IMR-90 (cell line): ENCODE measurements at regions of chr7 and their contacts with region 1.

Region 1: DNA sequence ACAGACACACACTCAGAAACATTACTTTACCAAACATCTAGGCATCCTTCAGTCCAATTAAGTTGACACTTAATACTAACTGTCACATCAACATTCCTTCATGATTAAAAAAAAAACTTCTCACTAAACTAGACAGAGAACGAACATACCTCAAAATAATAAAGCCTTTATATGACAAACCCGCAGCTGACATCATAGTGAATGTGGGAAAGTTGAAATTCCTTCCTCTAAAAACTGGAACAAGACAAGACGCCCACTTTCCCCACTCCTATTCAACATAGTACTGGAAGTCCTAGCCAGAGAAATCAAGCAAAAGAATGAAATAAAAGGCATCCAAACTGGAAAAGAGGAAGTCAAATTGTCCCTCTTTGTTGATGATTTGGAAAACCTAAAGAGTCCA is 96.9 kb upstream of the PPP1R9A start:
- DNase-seq: no peak
- ATAC-seq: no peak
- H3K4me3 ChIP-seq: no peak overlapping the region
- H3K27ac ChIP-seq: no peak overlapping the region
- H3K4me1 ChIP-seq: no peaks in the 10 kb centered on the region
- H3K27me3 ChIP-seq: no peaks in the 10 kb centered on the region
- CTCF ChIP-seq: no peak
- POLR2A ChIP-seq: no peak
- RAD21 ChIP-seq: no peak

Region 2: GRCh38 chr7:94787285-94787684 is 23.2 kb before region 1 on chr7:
- CTCF ChIA-PET with region 1: no interaction called
- POLR2A ChIA-PET with region 1: no interaction called
- dilution Hi-C with region 1: no loop called
- in situ Hi-C with region 1: no loop called
- intact Hi-C with region 1: loop called (anchors 2 kb)
- DNase-seq: no peak
- ATAC-seq: no peak
- H3K4me3 ChIP-seq: no peak overlapping the region
- H3K27ac ChIP-seq: no peak overlapping the region
- H3K4me1 ChIP-seq: no peaks in the 10 kb centered on the region
- H3K27me3 ChIP-seq: no peaks in the 10 kb centered on the region
- CTCF ChIP-seq: no peak
- POLR2A ChIP-seq: no peak
- RAD21 ChIP-seq: no peak

Region 3: DNA sequence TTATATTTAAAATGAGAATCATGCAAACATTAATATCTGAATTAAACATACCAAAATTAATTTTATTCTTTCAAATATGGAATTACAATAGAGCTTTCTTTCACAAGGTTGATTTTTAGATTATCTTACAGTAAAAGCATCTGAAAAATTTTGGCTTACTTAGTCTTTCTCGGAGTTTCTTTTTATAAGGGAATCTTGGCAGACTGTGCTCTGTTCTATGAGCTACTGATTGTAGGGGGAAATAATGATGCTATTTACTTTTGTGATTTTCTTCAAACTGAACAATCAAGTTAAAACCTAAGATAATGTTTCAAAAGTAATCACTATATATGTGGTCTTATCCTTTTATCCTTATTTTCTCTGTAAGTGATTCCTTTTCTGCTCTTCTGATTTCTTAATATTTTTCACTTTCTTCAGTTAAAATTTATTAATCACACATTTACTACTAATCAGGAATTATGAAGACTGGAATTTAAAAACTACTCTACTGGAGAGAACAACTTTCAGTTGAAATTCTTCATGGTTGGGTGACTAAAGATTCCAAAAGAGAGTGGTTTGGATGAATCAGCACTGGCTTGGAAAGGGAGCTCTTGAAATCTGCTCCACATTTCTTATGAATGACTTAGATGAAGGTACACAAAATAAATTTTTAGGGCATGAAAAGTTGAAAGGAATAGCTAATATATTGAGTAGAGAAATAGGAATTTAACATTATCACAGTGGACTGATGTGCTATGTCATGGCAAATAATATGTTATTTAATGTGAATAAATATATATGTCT is 200.8 kb after region 1 on chr7:
- CTCF ChIA-PET with region 1: no interaction called
- POLR2A ChIA-PET with region 1: no interaction called
- dilution Hi-C with region 1: no loop called
- in situ Hi-C with region 1: no loop called
- intact Hi-C with region 1: no loop called
- DNase-seq: peak; percentile 21
- ATAC-seq: no peak
- H3K4me3 ChIP-seq: no peak overlapping the region
- H3K27ac ChIP-seq: no peak overlapping the region
- H3K4me1 ChIP-seq: no peaks in the 10 kb centered on the region
- H3K27me3 ChIP-seq: no peaks in the 10 kb centered on the region
- CTCF ChIP-seq: no peak
- POLR2A ChIP-seq: no peak
- RAD21 ChIP-seq: no peak

Region 4: GRCh38 chr7:95141755-95142154 is 331.3 kb after region 1 on chr7:
- CTCF ChIA-PET with region 1: no interaction called
- POLR2A ChIA-PET with region 1: no interaction called
- dilution Hi-C with region 1: no loop called
- in situ Hi-C with region 1: no loop called
- intact Hi-C with region 1: no loop called
- DNase-seq: no peak
- ATAC-seq: no peak
- H3K4me3 ChIP-seq: no peak overlapping the region
- H3K27ac ChIP-seq: no peak overlapping the region
- H3K4me1 ChIP-seq: no peaks in the 10 kb centered on the region
- H3K27me3 ChIP-seq: no peaks in the 10 kb centered on the region
- CTCF ChIP-seq: no peak
- POLR2A ChIP-seq: no peak
- RAD21 ChIP-seq: no peak